ENCODE measurements at regions of chr1 and their contacts with region 1.

Region 1: GRCh38 chr1:160550572-160551034 is 27.5 kb upstream of the SLAMF6 start:
- DNase-seq: peak in 5 of 9 donors; percentile 25 to 53 (median 40)
- ATAC-seq: peak; percentile 64
- H3K4me3 ChIP-seq: no peak overlapping the region
- H3K4me3 Mint-ChIP-seq: no peak overlapping the region
- H3K27ac ChIP-seq: no peak overlapping the region
- H3K27ac Mint-ChIP-seq: peak overlapping the region in 3 of 9 donors; percentile 29 to 69 (median 65)
- H3K4me1 ChIP-seq: peaks cover 2 to 5% of the 10 kb centered on the region in 2 donors
- H3K4me1 Mint-ChIP-seq: peaks cover 6 to 23% (median 17%) of the 10 kb centered on the region in 7 donors
- H3K27me3 ChIP-seq: no peaks in the 10 kb centered on the region
- H3K27me3 Mint-ChIP-seq: no peaks in the 10 kb centered on the region

Region 2: GRCh38 chr1:160567858-160568682 is 17.5 kb after region 1 on chr1:
- CTCF ChIA-PET with region 1: interaction called, 14 read pairs
- POLR2A ChIA-PET with region 1: interaction called, 33 read pairs
- intact Hi-C with region 1: no loop called
- DNase-seq: peak in 8 of 9 donors; percentile 49 to 70 (median 59)
- ATAC-seq: peak; percentile 92
- H3K4me3 ChIP-seq: peak overlapping the region; percentile 11
- H3K4me3 Mint-ChIP-seq: peak overlapping the region; percentile 6 to 90 (median 73)
- H3K27ac ChIP-seq: peak overlapping the region; percentile 67
- H3K27ac Mint-ChIP-seq: peak overlapping the region; percentile 86 to 98 (median 89)
- H3K4me1 ChIP-seq: peaks cover 75 to 96% of the 10 kb centered on the region in 2 donors
- H3K4me1 Mint-ChIP-seq: peaks cover 63 to 95% (median 83%) of the 10 kb centered on the region in 7 donors
- H3K27me3 ChIP-seq: no peaks in the 10 kb centered on the region
- H3K27me3 Mint-ChIP-seq: no peaks in the 10 kb centered on the region

Measured in naive thymus-derived CD4-positive, alpha-beta T cell (primary cell).